Activated naive CD4-positive, alpha-beta T cell treated with anti-CD3 and anti-CD28 coated beads, Interleukin-2, amount 10 ng/mL, durations not matched to agents 7 days and 5 days (primary cell): ENCODE measurements at regions of chr15 and their contacts with region 1.

Region 1: DNA sequence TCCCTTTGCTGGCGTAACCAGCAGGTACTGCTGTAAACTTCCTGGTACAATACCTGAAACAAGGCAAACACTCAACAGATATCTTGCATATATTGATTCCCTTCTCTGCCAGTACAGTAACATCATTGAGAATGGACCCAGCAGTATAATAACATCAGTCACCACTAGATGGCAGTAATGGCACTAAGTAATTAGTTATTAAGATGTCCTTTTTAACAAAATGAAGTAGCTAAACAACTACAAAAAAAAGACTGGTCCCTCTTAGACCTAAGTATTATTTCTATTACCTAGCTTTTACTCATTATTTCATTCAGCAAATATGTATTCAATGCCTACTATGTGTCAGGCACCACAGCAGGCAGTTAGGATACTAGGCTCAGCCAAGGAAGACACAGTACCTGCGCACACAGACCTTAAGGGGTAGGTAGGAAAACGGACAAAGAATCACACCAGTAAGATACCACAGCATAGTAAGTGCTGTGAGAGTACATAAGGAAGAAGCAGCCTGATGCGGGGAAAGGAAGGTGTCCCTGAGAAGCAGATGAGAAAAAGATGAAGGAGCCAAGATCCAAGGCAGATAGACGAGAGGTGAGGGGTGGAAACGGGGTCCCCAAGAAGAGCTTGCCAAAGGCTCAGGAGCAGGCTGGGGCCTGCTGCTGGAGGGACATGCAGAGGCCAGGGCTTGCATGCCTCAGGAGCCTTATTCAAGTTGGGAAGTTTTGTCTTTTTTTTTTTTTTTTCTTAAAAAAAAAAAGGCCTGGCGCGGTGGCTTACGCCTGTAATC is 102.8 kb upstream of the CHD2 start:
- DNase-seq: no peak
- H3K4me3 Mint-ChIP-seq: no peak overlapping the region
- H3K27ac Mint-ChIP-seq: no peak overlapping the region
- H3K4me1 Mint-ChIP-seq: peaks cover 21% of the 10 kb centered on the region
- H3K27me3 Mint-ChIP-seq: peaks cover 4% of the 10 kb centered on the region

Region 2: DNA sequence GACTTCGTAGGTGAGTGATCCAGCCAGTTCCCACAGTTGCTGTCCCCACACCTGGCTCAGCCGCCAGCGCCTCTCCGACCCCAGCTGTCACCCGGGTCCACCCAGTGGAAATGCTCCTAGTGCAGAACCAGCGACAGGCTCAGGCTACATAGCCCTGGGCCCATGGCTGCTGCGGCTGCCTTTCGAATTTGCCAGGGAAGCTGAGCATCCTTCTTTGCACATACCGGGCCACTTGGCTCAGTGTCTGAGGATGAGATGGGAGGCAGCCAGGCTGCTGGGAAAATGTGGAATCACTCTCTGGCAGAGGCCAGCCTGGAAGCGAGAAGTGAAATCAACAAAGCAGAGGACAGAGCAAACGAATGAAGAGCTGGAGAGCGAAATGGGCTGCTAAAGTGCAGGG is 323.6 kb before region 1 on chr15:
- CTCF ChIA-PET with region 1: no interaction called
- DNase-seq: no peak
- H3K4me3 Mint-ChIP-seq: no peak overlapping the region
- H3K27ac Mint-ChIP-seq: no peak overlapping the region
- H3K4me1 Mint-ChIP-seq: no peaks in the 10 kb centered on the region
- H3K27me3 Mint-ChIP-seq: peaks cover 14% of the 10 kb centered on the region

Region 3: GRCh38 chr15:92751524-92751923 is 45.8 kb before region 1 on chr15:
- CTCF ChIA-PET with region 1: no interaction called
- DNase-seq: no peak
- H3K4me3 Mint-ChIP-seq: no peak overlapping the region
- H3K27ac Mint-ChIP-seq: no peak overlapping the region
- H3K4me1 Mint-ChIP-seq: no peaks in the 10 kb centered on the region
- H3K27me3 Mint-ChIP-seq: peaks cover 3% of the 10 kb centered on the region

Region 4: GRCh38 chr15:92808978-92809879 is 11.9 kb after region 1 on chr15:
- CTCF ChIA-PET with region 1: interaction called, 12 read pairs
- DNase-seq: peak; percentile 99
- H3K4me3 Mint-ChIP-seq: peak overlapping the region; percentile 81
- H3K27ac Mint-ChIP-seq: peak overlapping the region; percentile 99
- H3K4me1 Mint-ChIP-seq: peaks cover 59% of the 10 kb centered on the region
- H3K27me3 Mint-ChIP-seq: no peaks in the 10 kb centered on the region

Region 5: DNA sequence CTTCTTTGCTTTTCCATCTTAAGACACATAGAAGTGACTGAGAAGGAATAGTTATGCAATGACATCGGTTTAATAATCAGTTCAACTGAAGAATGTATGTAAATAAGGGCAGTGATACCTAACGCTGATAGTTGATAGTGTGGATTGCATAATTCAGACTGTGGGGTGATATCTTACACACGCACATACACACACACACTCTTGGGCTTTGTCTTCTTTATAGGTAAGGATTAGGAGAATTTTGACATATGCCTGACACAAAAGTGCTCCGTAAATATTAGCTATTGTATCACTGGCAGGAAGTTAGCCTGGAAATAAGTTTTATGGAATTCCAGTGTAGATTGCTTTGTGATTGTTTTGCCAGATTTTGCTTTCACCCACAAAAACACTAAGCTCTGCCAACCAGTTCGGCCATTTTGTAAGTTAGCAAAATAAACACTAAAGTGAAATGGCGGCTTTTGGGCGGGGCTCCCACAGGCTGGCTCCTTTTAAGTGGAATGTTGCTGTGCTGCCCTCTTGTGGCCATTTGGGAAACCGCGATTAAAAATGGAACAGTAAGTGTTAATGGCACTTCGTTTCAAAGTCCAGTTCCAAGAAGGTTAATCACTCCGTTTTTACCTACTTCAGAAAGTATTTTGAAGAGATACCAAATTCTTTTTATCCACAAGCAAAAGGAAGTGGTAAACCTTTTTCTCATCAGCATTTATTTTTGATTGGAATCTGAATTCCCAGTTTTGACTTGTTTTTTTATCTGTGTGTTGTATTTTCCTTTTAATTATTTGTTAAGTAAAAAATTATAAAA is 120.4 kb after region 1 on chr15:
- CTCF ChIA-PET with region 1: interaction called, 68 read pairs
- DNase-seq: peak; percentile 96
- H3K4me3 Mint-ChIP-seq: peak overlapping the region; percentile 42
- H3K27ac Mint-ChIP-seq: peak overlapping the region; percentile 96
- H3K4me1 Mint-ChIP-seq: peaks cover 85% of the 10 kb centered on the region
- H3K27me3 Mint-ChIP-seq: no peaks in the 10 kb centered on the region

Region 6: GRCh38 chr15:92924216-92924615 is 126.9 kb after region 1 on chr15:
- CTCF ChIA-PET with region 1: interaction called, 68 read pairs
- DNase-seq: no peak
- H3K4me3 Mint-ChIP-seq: no peak overlapping the region
- H3K27ac Mint-ChIP-seq: no peak overlapping the region
- H3K4me1 Mint-ChIP-seq: peaks cover 68% of the 10 kb centered on the region
- H3K27me3 Mint-ChIP-seq: no peaks in the 10 kb centered on the region

Region 7: GRCh38 chr15:93018580-93018979 is 221.2 kb after region 1 on chr15:
- CTCF ChIA-PET with region 1: interaction called, 35 read pairs
- DNase-seq: no peak
- H3K4me3 Mint-ChIP-seq: no peak overlapping the region
- H3K27ac Mint-ChIP-seq: peak overlapping the region; percentile 57
- H3K4me1 Mint-ChIP-seq: peaks cover 62% of the 10 kb centered on the region
- H3K27me3 Mint-ChIP-seq: no peaks in the 10 kb centered on the region

Region 8: GRCh38 chr15:93030430-93031105 is 233.2 kb after region 1 on chr15:
- CTCF ChIA-PET with region 1: interaction called, 46 read pairs
- DNase-seq: peak; percentile 78
- H3K4me3 Mint-ChIP-seq: no peak overlapping the region
- H3K27ac Mint-ChIP-seq: peak overlapping the region; percentile 49
- H3K4me1 Mint-ChIP-seq: peaks cover 16% of the 10 kb centered on the region
- H3K27me3 Mint-ChIP-seq: peaks cover 3% of the 10 kb centered on the region

Region 9: DNA sequence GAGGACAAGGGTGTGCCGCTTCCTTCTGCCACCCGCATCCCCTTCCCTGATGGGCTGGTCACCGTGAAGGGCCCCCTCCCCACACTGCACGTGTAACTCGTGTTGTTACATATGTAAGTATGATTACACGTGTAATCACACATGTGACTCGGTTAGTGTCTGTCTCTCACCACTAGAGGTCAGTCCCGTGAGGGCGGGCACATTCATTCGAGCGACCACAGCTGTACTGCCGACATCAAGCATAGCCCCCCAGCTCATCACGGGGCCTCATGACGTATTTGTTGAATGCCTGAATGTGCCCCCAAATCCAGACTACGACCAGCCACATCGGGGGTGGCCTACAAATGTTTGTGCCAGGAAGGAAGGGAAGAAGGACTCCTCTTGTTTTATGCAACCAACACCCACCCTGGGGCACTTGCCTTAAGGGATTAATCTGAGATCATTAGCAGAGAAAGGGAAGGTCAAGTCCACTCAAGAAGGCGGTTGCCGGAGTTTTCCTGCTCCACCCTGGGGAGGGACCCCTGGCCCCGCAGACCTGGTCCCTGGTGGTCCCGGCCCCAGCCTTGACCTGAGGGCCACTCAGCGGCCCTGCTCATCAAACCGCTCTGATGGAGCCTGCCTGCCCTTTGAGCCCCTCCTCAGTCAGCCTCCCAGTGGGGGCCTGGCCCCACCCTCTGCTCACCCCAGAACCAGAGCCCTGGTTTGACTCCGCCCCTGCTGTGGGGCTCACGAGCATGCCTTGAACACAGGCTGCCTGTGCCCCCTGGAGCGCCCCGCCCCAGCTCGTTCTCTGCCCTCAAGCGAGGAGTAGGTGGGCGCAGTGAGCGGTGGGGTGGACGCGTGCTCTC is 238.8 kb after region 1 on chr15:
- CTCF ChIA-PET with region 1: interaction called, 24 read pairs
- DNase-seq: peak; percentile 61
- H3K4me3 Mint-ChIP-seq: no peak overlapping the region
- H3K27ac Mint-ChIP-seq: no peak overlapping the region
- H3K4me1 Mint-ChIP-seq: peaks cover 2% of the 10 kb centered on the region
- H3K27me3 Mint-ChIP-seq: peaks cover 3% of the 10 kb centered on the region